ENCODE measurements at regions of chr9 and their contacts with region 1.

Region 1: GRCh38 chr9:120625222-120625621 is 45.3 kb upstream of the CDK5RAP2 start:
- DNase-seq: peak; percentile 51
- ATAC-seq: peak; percentile 15; the same call in 1 of the 2 replicates
- H3K4me3 ChIP-seq: no peak overlapping the region
- H3K27ac ChIP-seq: no peak overlapping the region
- H3K4me1 ChIP-seq: peaks cover 2% of the 10 kb centered on the region
- H3K27me3 ChIP-seq: no peaks in the 10 kb centered on the region
- CTCF ChIP-seq: no peak
- POLR2A ChIP-seq: no peak
- RAD21 ChIP-seq: no peak

Region 2: GRCh38 chr9:120642129-120642770 is 17.0 kb after region 1 on chr9:
- CTCF ChIA-PET with region 1: no interaction called
- POLR2A ChIA-PET with region 1: no interaction called
- dilution Hi-C with region 1: no loop called
- in situ Hi-C with region 1: no loop called
- intact Hi-C with region 1: loop called (anchors 2 kb)
- DNase-seq: peak; percentile 41
- ATAC-seq: peak; percentile 53
- H3K4me3 ChIP-seq: no peak overlapping the region
- H3K27ac ChIP-seq: no peak overlapping the region
- H3K4me1 ChIP-seq: peaks cover 4% of the 10 kb centered on the region
- H3K27me3 ChIP-seq: no peaks in the 10 kb centered on the region
- CTCF ChIP-seq: no peak
- POLR2A ChIP-seq: no peak
- RAD21 ChIP-seq: no peak

Region 3: GRCh38 chr9:120692901-120693699 is 67.9 kb after region 1 on chr9:
- CTCF ChIA-PET with region 1: no interaction called
- POLR2A ChIA-PET with region 1: no interaction called
- dilution Hi-C with region 1: no loop called
- in situ Hi-C with region 1: no loop called
- intact Hi-C with region 1: loop called (anchors 5 kb)
- DNase-seq: peak; percentile 74
- ATAC-seq: peak; percentile 60
- H3K4me3 ChIP-seq: no peak overlapping the region
- H3K27ac ChIP-seq: peak overlapping the region; percentile 89; the same call in 1 of the 2 replicates
- H3K4me1 ChIP-seq: peaks cover 13% of the 10 kb centered on the region
- H3K27me3 ChIP-seq: no peaks in the 10 kb centered on the region
- CTCF ChIP-seq: no peak
- POLR2A ChIP-seq: no peak
- RAD21 ChIP-seq: no peak

Measured in IMR-90 (cell line).